Heart right ventricle (tissue), 16 donors: ENCODE measurements at regions of chr9 and their contacts with region 1.

Region 1: DNA sequence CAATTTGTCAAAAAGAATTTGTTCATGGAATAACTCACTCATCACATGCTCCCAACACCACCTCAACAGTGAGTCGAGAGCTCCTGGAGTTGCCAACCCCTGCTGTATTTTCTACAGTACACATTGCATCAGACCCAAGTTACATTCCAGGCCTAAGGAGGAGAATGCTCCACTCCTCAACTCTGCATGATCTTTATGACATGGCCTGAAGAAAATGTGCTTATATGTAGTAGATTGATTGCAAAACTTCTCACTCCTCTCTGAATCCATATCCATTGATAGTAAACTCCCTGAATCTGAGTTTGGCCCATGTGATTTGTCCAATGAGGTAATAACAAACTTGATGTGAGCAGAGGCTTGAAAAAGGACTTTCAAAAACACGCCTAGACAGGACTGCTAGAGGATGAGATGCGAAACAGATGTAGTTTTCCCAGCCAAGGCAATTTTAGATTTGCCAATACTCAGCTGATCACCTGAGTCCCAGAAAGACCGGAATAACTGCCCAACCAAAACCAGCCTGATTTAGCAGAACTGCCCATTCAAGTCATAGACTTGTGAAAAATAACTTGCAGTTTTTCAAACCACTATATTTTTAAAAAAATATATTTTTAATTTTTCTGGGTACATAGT is 29.0 kb upstream of the PAPPA start:
- DNase-seq: no peak
- ATAC-seq: no peak
- H3K4me3 ChIP-seq: no peak overlapping the region
- H3K27ac ChIP-seq: no peak overlapping the region
- H3K4me1 ChIP-seq: no peaks in the 10 kb centered on the region
- H3K27me3 ChIP-seq: no peaks in the 10 kb centered on the region
- CTCF ChIP-seq: no peak

Region 2: DNA sequence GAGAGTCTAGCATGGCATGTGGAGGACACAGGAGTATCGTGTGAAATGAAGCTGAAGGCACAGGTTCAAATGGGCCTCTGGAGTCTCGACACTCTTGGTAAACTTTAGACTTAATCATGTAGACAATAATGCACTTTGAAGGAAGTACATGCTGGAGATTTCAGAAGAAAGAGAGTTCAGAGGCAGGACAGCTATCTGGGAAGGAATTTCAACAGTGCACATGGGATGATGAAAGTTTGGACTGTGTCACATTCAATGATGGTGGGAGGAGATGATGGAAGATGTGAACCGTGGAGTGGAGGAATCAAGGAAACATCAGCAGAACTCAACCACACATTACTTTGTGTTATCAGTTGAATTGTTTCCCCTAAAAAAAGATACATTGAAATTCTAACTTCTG is 59.6 kb before region 1 on chr9:
- intact Hi-C with region 1: no loop called
- DNase-seq: no peak
- ATAC-seq: no peak
- H3K4me3 ChIP-seq: no peak overlapping the region
- H3K27ac ChIP-seq: no peak overlapping the region
- H3K4me1 ChIP-seq: no peaks in the 10 kb centered on the region
- H3K27me3 ChIP-seq: no peaks in the 10 kb centered on the region
- CTCF ChIP-seq: no peak

Region 3: DNA sequence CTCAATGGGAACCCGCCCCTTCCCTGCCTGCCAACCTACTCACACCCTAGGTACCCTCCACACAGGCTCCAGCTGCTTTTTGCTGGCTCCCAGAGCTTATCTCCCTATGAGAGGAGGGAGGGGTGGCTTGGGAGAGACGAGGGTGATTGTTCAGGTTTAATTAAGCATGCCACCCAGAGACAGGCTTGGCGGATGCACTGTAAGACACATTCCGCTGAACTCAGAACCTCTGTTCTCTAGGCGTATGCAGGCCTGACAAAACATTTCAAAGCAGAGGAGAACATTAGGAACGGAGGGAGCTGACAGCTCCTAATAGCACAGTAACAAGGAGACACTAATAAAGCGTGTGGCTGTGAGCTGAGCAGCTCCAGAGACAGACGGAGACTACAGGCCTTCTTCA is 642.6 kb after region 1 on chr9:
- intact Hi-C with region 1: loop called in 1 of 10 experiments (anchors 10 kb)
- DNase-seq: no peak
- ATAC-seq: no peak
- H3K4me3 ChIP-seq: no peak overlapping the region
- H3K27ac ChIP-seq: no peak overlapping the region
- H3K4me1 ChIP-seq: no peaks in the 10 kb centered on the region
- H3K27me3 ChIP-seq: peaks cover 0 to 20% (median 0%) of the 10 kb centered on the region in 7 donors
- CTCF ChIP-seq: no peak